A673 (cell line): ENCODE measurements at regions of chr1 and their contacts with region 1.

Region 1: DNA sequence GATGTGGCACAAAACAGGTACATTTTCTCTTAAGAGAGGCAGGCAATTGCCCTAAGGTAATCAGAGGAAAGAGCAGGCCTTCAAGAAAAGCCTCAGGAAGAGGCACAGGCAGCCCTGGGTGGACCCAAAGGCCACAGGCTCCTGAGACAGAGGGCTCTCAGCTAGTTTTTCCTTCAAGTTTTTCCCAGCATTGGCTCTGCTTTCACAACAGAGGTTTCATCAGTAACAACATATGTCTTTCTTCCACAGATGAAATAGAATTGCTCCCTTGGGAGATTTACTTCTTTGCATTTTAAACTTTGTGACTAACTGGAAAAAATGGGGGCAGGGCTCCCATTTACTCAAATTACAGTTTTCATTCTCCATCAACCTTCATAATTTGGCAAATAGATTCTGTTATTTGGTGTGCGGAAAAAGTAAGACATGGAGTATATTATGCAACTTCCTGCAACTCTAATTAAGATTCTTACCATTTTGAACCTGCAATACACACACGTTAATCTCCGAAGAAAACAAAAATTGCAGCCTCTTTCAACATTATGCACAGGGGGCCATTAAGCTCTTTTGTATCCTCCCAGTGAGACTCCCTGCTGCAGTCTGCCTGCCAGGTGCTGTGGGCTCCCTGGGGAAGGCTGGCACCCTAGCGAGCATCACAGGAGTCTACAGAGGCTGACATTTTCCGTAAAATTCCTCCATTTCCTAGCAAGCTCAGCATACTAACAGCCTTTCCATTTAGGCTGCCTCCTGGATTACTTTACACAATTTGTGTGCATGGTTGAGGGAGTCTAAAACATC is 282.3 kb downstream of the USH2A start:
- DNase-seq: peak; percentile 95
- H3K4me3 ChIP-seq: no peak overlapping the region
- H3K27ac ChIP-seq: peak overlapping the region; percentile 97
- H3K4me1 ChIP-seq: peaks cover 46% of the 10 kb centered on the region
- H3K27me3 ChIP-seq: no peaks in the 10 kb centered on the region
- CTCF ChIP-seq: no peak

Region 2: DNA sequence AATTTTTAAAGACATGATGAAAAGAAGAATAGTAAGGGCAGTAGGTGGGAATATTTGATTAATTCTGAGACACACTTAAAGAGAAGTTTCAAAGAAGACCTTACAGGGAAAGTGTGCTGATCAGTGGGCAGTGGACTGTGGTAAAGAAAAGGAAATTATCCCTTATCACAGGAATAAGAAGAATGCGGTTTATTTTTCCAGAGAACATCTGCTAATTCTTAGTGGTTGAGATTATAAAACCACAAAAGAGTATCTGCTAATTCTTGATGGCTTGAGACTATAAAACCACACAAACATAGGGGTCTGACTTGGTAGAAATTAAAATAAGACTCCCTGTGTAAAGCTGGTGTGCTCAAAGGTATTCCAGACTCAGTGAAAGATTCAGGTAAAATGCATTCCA is 633.8 kb before region 1 on chr1:
- CTCF ChIA-PET with region 1: no interaction called
- POLR2A ChIA-PET with region 1: interaction called, 15 read pairs
- intact Hi-C with region 1: no loop called
- DNase-seq: no peak
- H3K4me3 ChIP-seq: no peak overlapping the region
- H3K27ac ChIP-seq: no peak overlapping the region
- H3K4me1 ChIP-seq: no peaks in the 10 kb centered on the region
- H3K27me3 ChIP-seq: no peaks in the 10 kb centered on the region
- CTCF ChIP-seq: no peak

Region 3: DNA sequence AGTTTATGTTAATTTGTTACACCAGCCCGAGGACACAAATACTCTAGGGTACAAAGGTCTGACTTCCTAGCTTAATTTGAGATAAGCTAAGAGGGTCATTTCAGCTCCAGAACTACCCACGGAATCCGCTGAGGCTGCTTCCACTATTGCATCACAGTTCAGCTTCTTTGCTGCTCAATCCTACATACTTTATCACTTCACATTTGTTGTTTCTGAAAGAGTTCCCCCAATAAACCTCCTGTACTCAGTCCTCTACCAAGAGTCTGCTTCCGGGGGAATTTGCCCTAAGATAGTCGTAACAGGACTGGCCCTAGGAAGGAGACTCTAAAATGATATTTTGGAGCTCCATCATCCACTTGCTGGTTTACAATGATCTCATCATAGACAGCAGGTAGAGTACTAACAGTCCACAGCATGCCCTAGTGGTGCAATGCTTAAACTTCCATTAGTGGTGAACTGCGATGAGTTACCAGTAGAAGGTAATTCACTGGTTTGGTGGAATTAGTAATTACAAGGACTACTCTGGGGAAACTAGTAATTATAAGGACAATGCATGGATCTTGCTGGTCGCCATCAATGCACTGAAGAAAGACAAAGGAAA is 53.0 kb after region 1 on chr1:
- CTCF ChIA-PET with region 1: no interaction called
- POLR2A ChIA-PET with region 1: no interaction called
- intact Hi-C with region 1: no loop called
- DNase-seq: peak; percentile 25
- H3K4me3 ChIP-seq: no peak overlapping the region
- H3K27ac ChIP-seq: no peak overlapping the region
- H3K4me1 ChIP-seq: no peaks in the 10 kb centered on the region
- H3K27me3 ChIP-seq: peaks cover 22% of the 10 kb centered on the region
- CTCF ChIP-seq: peak; percentile 47

Region 4: GRCh38 chr1:216325946-216326345 is 185.0 kb after region 1 on chr1:
- CTCF ChIA-PET with region 1: no interaction called
- POLR2A ChIA-PET with region 1: no interaction called
- intact Hi-C with region 1: no loop called
- DNase-seq: peak; percentile 11
- H3K4me3 ChIP-seq: no peak overlapping the region
- H3K27ac ChIP-seq: no peak overlapping the region
- H3K4me1 ChIP-seq: no peaks in the 10 kb centered on the region
- H3K27me3 ChIP-seq: no peaks in the 10 kb centered on the region
- CTCF ChIP-seq: no peak